ENCODE measurements at regions of chr3 and their contacts with region 1.

Region 1: DNA sequence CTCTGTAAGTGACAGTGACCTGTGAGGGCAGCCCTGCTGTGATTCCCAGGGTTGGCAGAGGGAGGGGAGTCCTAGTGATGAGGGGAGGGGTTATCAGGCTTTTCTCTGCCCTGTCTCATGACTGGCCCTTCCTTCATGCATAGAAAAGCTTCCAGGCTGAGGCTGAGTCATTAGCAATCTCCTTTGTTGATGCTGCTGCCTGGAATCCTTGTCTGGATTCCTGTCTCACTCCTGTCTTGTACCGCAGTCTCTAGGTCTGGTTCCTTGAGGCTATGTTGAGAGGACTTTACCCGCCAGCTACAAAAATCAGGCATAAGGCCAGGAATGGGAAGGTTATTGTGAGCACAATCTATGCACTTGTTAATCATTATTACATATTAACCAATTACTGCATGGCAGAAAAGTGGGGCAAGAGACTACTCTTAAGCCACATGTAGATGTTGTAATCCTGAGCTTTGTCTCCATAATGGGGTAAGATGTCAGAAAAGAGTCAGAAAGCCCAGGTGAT is 7.2 kb downstream of the KLHL6 start:
- DNase-seq: no peak
- ATAC-seq: no peak
- H3K4me3 ChIP-seq: no peak overlapping the region
- H3K27ac ChIP-seq: no peak overlapping the region
- H3K4me1 ChIP-seq: peaks cover 8% of the 10 kb centered on the region
- H3K27me3 ChIP-seq: no peaks in the 10 kb centered on the region; a peak in 1 of 4 replicates
- CTCF ChIP-seq: no peak
- EP300 ChIP-seq: no peak
- POLR2A ChIP-seq: no peak
- RAD21 ChIP-seq: no peak

Region 2: GRCh38 chr3:183475016-183475763 is 73.1 kb before region 1 on chr3:
- CTCF ChIA-PET with region 1: interaction called, 22 read pairs
- POLR2A ChIA-PET with region 1: interaction called, 3 read pairs
- RAD21 ChIA-PET with region 1: interaction called, 27 read pairs
- SMC1A ChIA-PET with region 1: interaction called, 11 read pairs
- in situ Hi-C with region 1: no loop called
- intact Hi-C with region 1: no loop called
- DNase-seq: no peak
- ATAC-seq: no peak
- H3K4me3 ChIP-seq: no peak overlapping the region
- H3K27ac ChIP-seq: no peak overlapping the region
- H3K4me1 ChIP-seq: no peaks in the 10 kb centered on the region
- H3K27me3 ChIP-seq: no peaks in the 10 kb centered on the region; a peak in 1 of 4 replicates
- CTCF ChIP-seq: no peak
- EP300 ChIP-seq: no peak
- POLR2A ChIP-seq: no peak
- RAD21 ChIP-seq: no peak

Region 3: GRCh38 chr3:183515968-183516851 is 32.1 kb before region 1 on chr3:
- CTCF ChIA-PET with region 1: interaction called, 34 read pairs
- POLR2A ChIA-PET with region 1: interaction called, 73 read pairs
- RAD21 ChIA-PET with region 1: interaction called, 245 read pairs
- SMC1A ChIA-PET with region 1: interaction called, 60 read pairs
- in situ Hi-C with region 1: no loop called
- intact Hi-C with region 1: no loop called
- DNase-seq: peak; percentile 77
- ATAC-seq: peak; percentile 61
- H3K4me3 ChIP-seq: no peak overlapping the region
- H3K27ac ChIP-seq: peak overlapping the region; percentile 7; the same call in 1 of the 2 replicates
- H3K4me1 ChIP-seq: peaks cover 43% of the 10 kb centered on the region
- H3K27me3 ChIP-seq: no peaks in the 10 kb centered on the region
- CTCF ChIP-seq: peak; percentile 15 to 21 (median 20); a peak in 3 of 6 replicates
- EP300 ChIP-seq: peak in 1 of 2 experiments; percentile 91; a peak in 2 of 4 replicates
- POLR2A ChIP-seq: peak; percentile 33; the same call in 1 of the 2 replicates
- RAD21 ChIP-seq: peak; percentile 32

Region 4: DNA sequence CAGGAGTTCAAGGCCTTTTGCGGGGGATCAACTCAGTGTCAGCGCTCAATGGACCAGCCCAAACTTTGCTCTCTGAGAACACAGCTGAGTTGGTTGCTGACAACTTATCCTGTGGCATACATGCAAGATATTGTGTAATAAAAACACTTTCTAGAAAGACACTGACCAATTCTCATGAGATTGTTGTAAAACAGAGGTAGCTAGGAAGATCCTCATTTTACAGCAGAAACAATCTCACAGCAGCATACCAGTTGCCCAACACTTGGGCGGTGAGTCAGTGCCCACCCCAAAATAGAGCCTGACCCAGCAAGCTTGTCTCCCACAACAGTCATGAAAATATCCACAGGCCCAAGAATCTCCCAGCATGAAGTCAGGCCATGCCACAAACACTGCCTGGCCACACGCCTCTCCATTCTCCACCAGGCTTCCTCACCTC is 11.0 kb before region 1 on chr3:
- CTCF ChIA-PET with region 1: interaction called, 37 read pairs
- POLR2A ChIA-PET with region 1: interaction called, 172 read pairs
- RAD21 ChIA-PET with region 1: interaction called, 154 read pairs
- SMC1A ChIA-PET with region 1: interaction called, 155 read pairs
- in situ Hi-C with region 1: no loop called
- intact Hi-C with region 1: loop called (anchors 1 kb)
- DNase-seq: no peak
- ATAC-seq: no peak
- H3K4me3 ChIP-seq: no peak overlapping the region
- H3K27ac ChIP-seq: no peak overlapping the region
- H3K4me1 ChIP-seq: peaks cover 75% of the 10 kb centered on the region
- H3K27me3 ChIP-seq: no peaks in the 10 kb centered on the region
- CTCF ChIP-seq: no peak
- EP300 ChIP-seq: no peak
- POLR2A ChIP-seq: no peak
- RAD21 ChIP-seq: no peak

Region 5: GRCh38 chr3:183635431-183636220 is 87.3 kb after region 1 on chr3 and contains the start of gene KLHL24:
- CTCF ChIA-PET with region 1: no interaction called
- POLR2A ChIA-PET with region 1: interaction called, 26 read pairs
- RAD21 ChIA-PET with region 1: interaction called, 12 read pairs
- SMC1A ChIA-PET with region 1: interaction called, 20 read pairs
- in situ Hi-C with region 1: no loop called
- intact Hi-C with region 1: loop called (anchors 1 kb)
- DNase-seq: peak; percentile 60
- ATAC-seq: peak; percentile 91
- H3K4me3 ChIP-seq: peak within 1 kb of the TSS; percentile 80
- H3K27ac ChIP-seq: peak within 1 kb of the TSS; percentile 77
- H3K4me1 ChIP-seq: peaks cover 19% of the 10 kb centered on the region; the same call in 1 of the 2 replicates
- H3K27me3 ChIP-seq: no peaks in the 10 kb centered on the region; a peak in 1 of 4 replicates
- CTCF ChIP-seq: 0 out of 6 replicates have a peak, but pooled peaks of 1 of the 3 experiments have one; percentile 5
- EP300 ChIP-seq: no peak
- POLR2A ChIP-seq: peak; percentile 90
- RAD21 ChIP-seq: no peak
- polyA plus RNA-seq, gene KLHL24: 0.91 to 1.6 TPM